Ascending aorta (tissue), 2 donors: ENCODE measurements at regions of chr3 and their contacts with region 1.

Region 1: GRCh38 chr3:61561374-61562041 is at the start of gene PTPRG:
- DNase-seq: peak; percentile 61 to 94
- H3K4me3 ChIP-seq: peak within 1 kb of the TSS; percentile 98 to 99
- H3K27ac ChIP-seq: peak within 1 kb of the TSS; percentile 96 to 99
- H3K4me1 ChIP-seq: peaks cover 0 to 8% of the 10 kb centered on the region in 2 donors
- H3K27me3 ChIP-seq: no peaks in the 10 kb centered on the region
- CTCF ChIP-seq: no peak
- total RNA-seq, gene PTPRG: 129 TPM

Region 2: GRCh38 chr3:61251174-61251972 is 310.1 kb before region 1 on chr3 and contains the start of gene FHIT:
- intact Hi-C with region 1: loop called (anchors 5 kb)
- DNase-seq: peak; percentile 87 to 96
- H3K4me3 ChIP-seq: peak within 1 kb of the TSS; percentile 66 to 76
- H3K27ac ChIP-seq: peak within 1 kb of the TSS; percentile 15 to 34
- H3K4me1 ChIP-seq: peaks cover 6 to 7% of the 10 kb centered on the region in 2 donors
- H3K27me3 ChIP-seq: no peaks in the 10 kb centered on the region
- CTCF ChIP-seq: no peak
- total RNA-seq, gene FHIT: 0.21 TPM

Region 3: DNA sequence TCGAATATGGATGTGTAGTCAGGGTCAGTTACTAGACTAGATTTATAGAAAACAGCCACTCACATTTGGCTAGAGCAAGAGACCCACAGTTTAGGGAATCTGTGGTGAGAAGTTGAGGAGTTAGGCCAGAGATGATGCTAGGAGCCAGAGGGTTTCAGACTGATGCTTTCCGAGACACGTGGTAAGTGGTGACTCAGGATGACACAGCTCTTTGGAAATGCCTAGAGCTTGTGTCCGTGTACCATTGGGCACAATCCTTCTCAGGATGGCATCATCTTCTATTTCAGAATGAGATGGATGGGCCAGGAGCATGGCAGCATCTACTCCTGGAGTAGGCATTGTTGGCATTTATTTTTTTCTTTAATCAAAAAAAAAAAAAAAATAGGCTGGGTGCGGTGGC is 28.3 kb after region 1 on chr3:
- intact Hi-C with region 1: no loop called
- DNase-seq: no peak
- H3K4me3 ChIP-seq: no peak overlapping the region
- H3K27ac ChIP-seq: no peak overlapping the region
- H3K4me1 ChIP-seq: no peaks in the 10 kb centered on the region
- H3K27me3 ChIP-seq: no peaks in the 10 kb centered on the region
- CTCF ChIP-seq: no peak

Region 4: DNA sequence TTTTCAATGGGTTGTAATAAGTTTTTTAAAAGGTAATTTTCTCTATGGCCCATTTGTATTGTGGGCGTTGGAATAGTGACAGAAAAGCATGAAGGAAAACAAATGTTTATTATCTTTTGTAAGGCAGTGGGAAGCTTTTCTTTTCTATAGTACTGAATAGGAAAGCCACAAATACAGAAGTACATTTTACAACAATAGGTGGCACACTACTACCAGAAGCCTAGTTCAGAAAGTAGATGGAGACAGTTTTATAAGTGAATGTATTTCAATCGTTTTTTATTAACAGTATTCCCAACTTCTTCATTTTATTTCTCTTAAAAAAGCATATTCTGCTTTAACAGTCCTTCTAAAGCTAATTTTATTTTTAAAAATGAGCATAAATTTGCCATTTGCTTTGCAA is 296.5 kb after region 1 on chr3:
- intact Hi-C with region 1: loop called (anchors 2 kb)
- DNase-seq: no peak
- H3K4me3 ChIP-seq: no peak overlapping the region
- H3K27ac ChIP-seq: no peak overlapping the region
- H3K4me1 ChIP-seq: peaks cover 0 to 29% of the 10 kb centered on the region in 2 donors
- H3K27me3 ChIP-seq: no peaks in the 10 kb centered on the region
- CTCF ChIP-seq: peak in 2 of 3 experiments; percentile 21 to 60

Region 5: DNA sequence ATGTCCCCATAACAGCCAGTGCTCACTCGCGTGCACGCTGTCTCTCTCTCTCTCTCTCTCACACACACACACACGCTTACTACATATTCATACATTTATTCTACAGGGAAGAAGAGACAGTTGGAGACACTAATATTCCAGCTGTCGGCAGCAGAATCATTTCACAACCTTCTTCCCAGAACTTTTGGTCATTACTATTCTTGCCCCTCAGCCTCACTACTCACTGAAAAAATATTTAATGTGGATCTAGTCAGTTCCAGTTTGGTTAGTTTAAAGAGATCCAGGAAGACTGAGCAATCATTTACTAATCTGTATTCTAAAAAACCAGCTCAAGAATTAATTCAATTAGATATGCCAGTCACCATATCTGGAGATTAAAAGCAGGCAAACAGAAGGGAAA is 394.7 kb after region 1 on chr3:
- intact Hi-C with region 1: loop called (anchors 5 kb)
- DNase-seq: no peak
- H3K4me3 ChIP-seq: peak overlapping the region in 1 of 2 donors; percentile 19
- H3K27ac ChIP-seq: peak overlapping the region; percentile 20 to 60
- H3K4me1 ChIP-seq: peaks cover 0 to 27% of the 10 kb centered on the region in 2 donors
- H3K27me3 ChIP-seq: no peaks in the 10 kb centered on the region
- CTCF ChIP-seq: no peak

Region 6: GRCh38 chr3:62131592-62131991 is 570.1 kb after region 1 on chr3:
- intact Hi-C with region 1: loop called (anchors 5 kb)
- DNase-seq: no peak
- H3K4me3 ChIP-seq: no peak overlapping the region
- H3K27ac ChIP-seq: peak overlapping the region; percentile 66 to 73
- H3K4me1 ChIP-seq: peaks cover 4 to 33% of the 10 kb centered on the region in 2 donors
- H3K27me3 ChIP-seq: no peaks in the 10 kb centered on the region
- CTCF ChIP-seq: peak in 1 of 3 experiments; percentile 30

Region 7: GRCh38 chr3:62188681-62189383 is 627.3 kb after region 1 on chr3:
- intact Hi-C with region 1: loop called (anchors 1 kb)
- DNase-seq: peak in 1 of 2 donors; percentile 87
- H3K4me3 ChIP-seq: peak overlapping the region; percentile 4 to 30
- H3K27ac ChIP-seq: peak overlapping the region in 1 of 2 donors; percentile 54
- H3K4me1 ChIP-seq: peaks cover 0 to 18% of the 10 kb centered on the region in 2 donors
- H3K27me3 ChIP-seq: no peaks in the 10 kb centered on the region
- CTCF ChIP-seq: peak; percentile 76 to 79 (median 77)